Activated CD4-positive, alpha-beta memory T cell treated with anti-CD3 and anti-CD28 coated beads, Interleukin-2, amount 10 ng/mL, durations not matched to agents 7 days and 5 days (primary cell): ENCODE measurements at regions of chr12 and their contacts with region 1.

Region 1: DNA sequence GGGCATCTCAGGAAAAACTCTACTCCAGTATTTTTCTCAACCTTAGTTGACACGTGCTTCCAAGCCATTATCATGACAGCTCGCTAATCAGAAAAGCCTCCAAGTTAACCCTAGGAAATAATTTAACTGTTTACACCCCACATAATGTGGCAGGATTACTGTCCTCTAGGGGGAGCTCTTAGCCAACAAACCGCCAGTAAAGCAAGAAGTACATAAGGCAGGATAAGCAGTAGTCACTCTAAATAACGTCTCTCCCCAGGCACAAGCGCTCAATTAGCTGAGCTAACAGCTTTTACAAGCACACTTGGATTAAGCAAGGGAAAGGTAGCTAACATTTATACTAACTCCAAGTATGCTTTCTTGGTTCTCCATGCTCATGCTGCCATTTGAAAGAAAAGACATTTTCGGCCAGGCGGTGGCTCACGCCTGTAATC is 22.8 kb downstream of the APOBEC1 start:
- DNase-seq: peak; percentile 53
- H3K4me3 Mint-ChIP-seq: no peak overlapping the region
- H3K27ac Mint-ChIP-seq: no peak overlapping the region
- H3K4me1 Mint-ChIP-seq: peaks cover 27% of the 10 kb centered on the region
- H3K27me3 Mint-ChIP-seq: peaks cover 11% of the 10 kb centered on the region

Region 2: DNA sequence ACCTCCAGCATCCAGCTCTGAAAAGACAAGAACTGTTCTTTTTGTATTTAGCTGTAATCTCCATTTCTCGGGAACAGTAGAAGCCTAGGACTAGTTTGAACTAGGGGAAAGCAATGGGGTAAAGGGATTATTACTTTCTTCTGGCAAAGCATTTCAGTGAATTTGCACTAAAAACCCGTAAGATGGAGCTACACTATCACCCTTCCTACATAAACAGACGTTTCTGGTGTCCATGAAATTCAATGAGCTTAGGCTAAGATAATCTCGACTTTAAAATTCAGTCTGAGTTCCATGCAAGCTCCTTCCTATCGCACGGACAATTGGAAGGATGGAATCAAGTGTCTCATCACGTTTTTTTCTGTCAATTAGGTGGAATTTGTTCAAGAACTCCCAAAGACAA is 315.0 kb before region 1 on chr12:
- CTCF ChIA-PET with region 1: no interaction called
- POLR2A ChIA-PET with region 1: no interaction called
- DNase-seq: no peak
- H3K4me3 Mint-ChIP-seq: no peak overlapping the region
- H3K27ac Mint-ChIP-seq: no peak overlapping the region
- H3K4me1 Mint-ChIP-seq: peaks cover 14% of the 10 kb centered on the region
- H3K27me3 Mint-ChIP-seq: peaks cover 6% of the 10 kb centered on the region

Region 3: DNA sequence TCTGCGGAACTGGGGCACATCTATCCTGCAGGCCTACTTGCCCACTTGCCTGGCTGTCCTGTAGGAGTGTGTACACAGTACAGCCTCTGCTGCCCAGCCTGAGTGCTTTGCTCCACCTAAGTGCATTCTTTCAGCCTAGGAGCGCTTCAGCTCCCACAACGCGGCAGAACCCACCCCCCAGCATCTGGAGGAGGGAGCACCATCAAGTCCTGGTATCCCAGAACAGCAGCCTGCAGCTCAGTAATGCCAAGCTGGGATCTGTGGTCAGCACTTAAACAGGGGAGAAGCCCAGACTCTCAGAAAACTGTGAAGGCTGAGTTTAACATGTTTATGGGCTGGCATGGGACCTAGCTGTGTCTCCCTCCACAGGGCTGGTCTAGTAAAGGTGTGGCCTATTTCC is 59.3 kb before region 1 on chr12:
- CTCF ChIA-PET with region 1: interaction called, 10 read pairs
- POLR2A ChIA-PET with region 1: no interaction called
- DNase-seq: no peak
- H3K4me3 Mint-ChIP-seq: no peak overlapping the region
- H3K27ac Mint-ChIP-seq: no peak overlapping the region
- H3K4me1 Mint-ChIP-seq: no peaks in the 10 kb centered on the region
- H3K27me3 Mint-ChIP-seq: peaks cover 28% of the 10 kb centered on the region

Region 4: GRCh38 chr12:7806863-7807487 is 164.1 kb after region 1 on chr12:
- CTCF ChIA-PET with region 1: interaction called, 35 read pairs
- POLR2A ChIA-PET with region 1: no interaction called
- DNase-seq: peak; percentile 61
- H3K4me3 Mint-ChIP-seq: no peak overlapping the region
- H3K27ac Mint-ChIP-seq: no peak overlapping the region
- H3K4me1 Mint-ChIP-seq: no peaks in the 10 kb centered on the region
- H3K27me3 Mint-ChIP-seq: peaks cover 4% of the 10 kb centered on the region